ENCODE measurements at regions of chr6 and their contacts with region 1.

Region 1: DNA sequence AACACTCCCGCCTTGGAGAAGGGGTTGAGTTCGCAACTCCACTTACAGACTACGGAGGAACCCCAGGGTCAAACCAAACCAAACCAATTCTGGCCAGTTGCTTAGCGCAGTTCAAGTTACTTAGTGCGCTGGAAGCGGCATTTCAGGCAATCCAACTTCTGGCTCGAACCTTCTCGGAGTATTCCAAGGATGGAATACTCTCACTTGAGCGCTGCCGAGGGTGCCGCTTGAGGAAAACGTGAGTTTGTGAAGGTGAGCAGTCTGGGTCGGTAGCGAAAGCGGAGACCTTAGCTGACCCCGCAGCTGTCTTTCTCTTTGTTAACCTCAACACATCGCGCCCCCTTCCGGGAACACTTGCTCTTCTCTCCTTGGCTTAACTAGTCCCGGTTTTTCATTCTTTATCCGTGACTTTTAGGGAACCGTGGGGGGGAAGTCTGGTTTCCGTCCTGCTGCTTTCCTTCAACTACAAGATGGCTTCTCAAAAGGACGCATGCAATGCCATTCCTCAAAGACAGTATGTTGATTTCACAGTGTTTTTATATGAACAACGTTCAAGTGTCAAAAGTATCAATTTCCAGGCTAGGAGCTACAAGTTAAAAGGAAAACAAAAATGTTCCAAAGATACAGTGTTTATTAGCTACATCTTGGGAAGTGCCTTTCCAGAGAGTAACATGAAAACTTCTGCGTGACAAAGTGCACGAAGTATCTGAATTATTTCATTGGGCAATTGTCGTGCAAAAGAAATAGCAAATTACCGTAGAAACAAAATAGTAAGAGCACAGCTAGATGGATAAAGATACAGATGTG is 742 bp upstream of the PNISR start:
- DNase-seq: peak; percentile 83
- H3K4me3 Mint-ChIP-seq: peak overlapping the region; percentile 95
- H3K27ac Mint-ChIP-seq: peak overlapping the region; percentile 99
- H3K4me1 Mint-ChIP-seq: peaks cover 58% of the 10 kb centered on the region
- H3K27me3 Mint-ChIP-seq: no peaks in the 10 kb centered on the region

Region 2: GRCh38 chr6:99064834-99065233 is 361.0 kb before region 1 on chr6:
- CTCF ChIA-PET with region 1: no interaction called
- intact Hi-C with region 1: no loop called
- DNase-seq: no peak
- H3K4me3 Mint-ChIP-seq: no peak overlapping the region
- H3K27ac Mint-ChIP-seq: no peak overlapping the region
- H3K4me1 Mint-ChIP-seq: no peaks in the 10 kb centered on the region
- H3K27me3 Mint-ChIP-seq: peaks cover 9% of the 10 kb centered on the region

Region 3: DNA sequence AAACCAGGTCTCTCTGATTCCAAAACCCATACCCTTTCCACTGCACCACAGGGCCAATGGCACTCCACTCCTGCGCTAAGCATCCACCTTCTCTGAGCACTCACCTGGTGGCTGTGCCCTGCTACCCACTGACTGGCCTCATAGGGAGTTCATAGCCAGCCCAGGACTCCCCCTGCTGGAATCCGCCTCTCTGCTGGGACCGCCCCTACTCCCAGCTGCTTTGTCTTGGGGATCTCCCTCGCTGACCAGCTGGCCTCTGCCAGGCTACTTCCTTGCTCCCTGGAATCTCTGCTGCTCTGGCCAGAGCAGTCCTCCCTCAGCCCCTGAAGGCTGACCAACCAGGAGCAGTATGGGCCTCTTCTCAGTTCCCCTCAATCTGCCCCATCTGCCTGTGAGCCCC is 206.1 kb before region 1 on chr6:
- CTCF ChIA-PET with region 1: no interaction called
- intact Hi-C with region 1: no loop called
- DNase-seq: no peak
- H3K4me3 Mint-ChIP-seq: no peak overlapping the region
- H3K27ac Mint-ChIP-seq: no peak overlapping the region
- H3K4me1 Mint-ChIP-seq: no peaks in the 10 kb centered on the region
- H3K27me3 Mint-ChIP-seq: peaks cover 12% of the 10 kb centered on the region

Region 4: DNA sequence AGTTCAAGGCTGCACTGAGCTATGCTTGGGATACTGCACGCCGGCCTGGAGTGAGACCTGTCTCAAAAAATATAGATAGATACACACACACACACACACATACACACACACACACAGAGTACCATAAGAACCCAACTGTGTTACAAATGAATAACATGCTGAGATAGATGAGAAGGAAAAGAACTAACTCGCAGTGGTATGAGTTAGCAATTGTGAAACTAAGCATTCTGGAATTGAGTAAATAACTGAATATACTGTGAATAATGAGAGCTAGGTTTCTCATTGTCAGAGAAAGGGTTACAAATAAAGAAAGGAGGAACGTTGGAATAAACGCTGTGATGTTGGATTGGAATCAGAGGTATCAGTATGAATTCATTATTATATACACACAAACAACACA is 61.8 kb before region 1 on chr6:
- CTCF ChIA-PET with region 1: no interaction called
- intact Hi-C with region 1: loop called (anchors 1 kb)
- DNase-seq: no peak
- H3K4me3 Mint-ChIP-seq: no peak overlapping the region
- H3K27ac Mint-ChIP-seq: no peak overlapping the region
- H3K4me1 Mint-ChIP-seq: peaks cover 3% of the 10 kb centered on the region
- H3K27me3 Mint-ChIP-seq: peaks cover 2% of the 10 kb centered on the region

Region 5: DNA sequence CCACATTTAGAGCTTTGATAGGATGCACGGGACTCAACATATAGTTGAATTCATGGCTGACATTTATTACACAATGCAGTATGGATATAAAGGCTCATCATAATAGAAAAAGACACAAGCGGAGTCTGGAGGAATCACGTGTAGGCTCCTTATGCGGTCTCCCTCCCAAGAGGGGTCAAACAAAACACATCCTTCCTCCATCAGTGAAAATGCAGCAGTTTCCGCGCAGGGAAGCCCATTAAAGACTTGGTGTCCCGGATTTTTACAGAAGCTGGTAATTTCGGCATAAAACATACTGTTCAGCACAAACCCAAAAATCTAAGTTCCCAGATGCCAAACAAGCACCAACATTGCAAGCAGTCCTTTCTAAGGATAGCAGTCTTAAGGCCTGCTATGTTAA is 88.2 kb after region 1 on chr6:
- CTCF ChIA-PET with region 1: no interaction called
- intact Hi-C with region 1: loop called (anchors 1 kb)
- DNase-seq: no peak
- H3K4me3 Mint-ChIP-seq: peak overlapping the region; percentile 93
- H3K27ac Mint-ChIP-seq: no peak overlapping the region
- H3K4me1 Mint-ChIP-seq: peaks cover 27% of the 10 kb centered on the region
- H3K27me3 Mint-ChIP-seq: no peaks in the 10 kb centered on the region

Region 6: GRCh38 chr6:99568103-99568933 is 142.5 kb after region 1 on chr6 and contains the start of gene CCNC:
- CTCF ChIA-PET with region 1: no interaction called
- intact Hi-C with region 1: loop called (anchors 1 kb)
- DNase-seq: peak; percentile 93
- H3K4me3 Mint-ChIP-seq: peak within 1 kb of the TSS; percentile 92
- H3K27ac Mint-ChIP-seq: peak within 1 kb of the TSS; percentile 92
- H3K4me1 Mint-ChIP-seq: peaks cover 28% of the 10 kb centered on the region
- H3K27me3 Mint-ChIP-seq: no peaks in the 10 kb centered on the region
- total RNA-seq, gene CCNC: 51.6 to 51.8 TPM

Region 7: DNA sequence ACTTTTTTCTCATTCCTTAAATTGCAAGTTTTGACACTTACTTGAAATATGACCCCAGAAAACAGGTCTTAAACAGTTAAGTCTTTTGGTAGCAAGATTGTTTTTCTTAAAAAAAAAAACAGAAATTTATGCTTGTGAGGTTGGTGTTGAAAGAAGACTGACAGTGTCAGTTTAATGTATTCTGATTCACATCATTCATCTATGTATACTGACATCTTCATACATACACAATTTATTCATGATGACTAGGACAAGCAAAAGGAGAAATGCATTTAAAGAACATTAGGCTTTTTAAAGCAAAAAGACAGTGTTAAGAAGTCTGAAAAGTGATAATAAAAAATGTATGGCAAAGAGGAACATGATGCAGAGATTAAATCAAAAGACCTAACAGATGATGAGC is 541.2 kb after region 1 on chr6:
- CTCF ChIA-PET with region 1: no interaction called
- intact Hi-C with region 1: no loop called
- DNase-seq: no peak
- H3K4me3 Mint-ChIP-seq: no peak overlapping the region
- H3K27ac Mint-ChIP-seq: no peak overlapping the region
- H3K4me1 Mint-ChIP-seq: no peaks in the 10 kb centered on the region
- H3K27me3 Mint-ChIP-seq: no peaks in the 10 kb centered on the region

Region 8: DNA sequence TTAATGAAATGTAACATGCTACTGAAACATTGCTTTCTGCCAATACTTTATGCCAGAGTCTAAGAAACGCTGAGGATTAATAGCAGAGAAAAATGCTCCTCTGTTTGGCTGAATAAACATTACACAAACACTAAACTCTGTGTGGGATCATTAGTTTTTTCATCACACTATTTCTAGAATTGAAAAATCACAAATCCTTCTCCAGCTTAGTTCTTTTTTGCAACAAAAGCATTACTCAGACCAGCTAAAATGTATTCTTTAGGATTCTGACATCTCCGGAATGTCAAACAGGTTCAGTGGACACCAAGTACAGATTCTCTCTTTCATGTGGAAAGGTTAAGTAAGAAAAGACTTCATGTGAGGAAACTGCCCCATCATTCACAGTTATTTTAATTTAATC is 812.0 kb after region 1 on chr6:
- CTCF ChIA-PET with region 1: no interaction called
- intact Hi-C with region 1: no loop called
- DNase-seq: no peak
- H3K4me3 Mint-ChIP-seq: no peak overlapping the region
- H3K27ac Mint-ChIP-seq: no peak overlapping the region
- H3K4me1 Mint-ChIP-seq: no peaks in the 10 kb centered on the region
- H3K27me3 Mint-ChIP-seq: peaks cover 2% of the 10 kb centered on the region

Region 9: GRCh38 chr6:100880853-100881706 is 1455.2 kb after region 1 on chr6 and contains the start of gene ASCC3:
- CTCF ChIA-PET with region 1: no interaction called
- intact Hi-C with region 1: loop called (anchors 5 kb)
- DNase-seq: peak; percentile 93
- H3K4me3 Mint-ChIP-seq: peak within 1 kb of the TSS; percentile 100
- H3K27ac Mint-ChIP-seq: peak within 1 kb of the TSS; percentile 99
- H3K4me1 Mint-ChIP-seq: peaks cover 40% of the 10 kb centered on the region
- H3K27me3 Mint-ChIP-seq: no peaks in the 10 kb centered on the region
- total RNA-seq, gene ASCC3: 55.9 to 58.4 TPM

Measured in activated naive CD4-positive, alpha-beta T cell treated with anti-CD3 and anti-CD28 coated beads for 36 hours (primary cell).